Endothelial cell of umbilical vein (primary cell): ENCODE measurements at regions of chr20 and their contacts with region 1.

Region 1: GRCh38 chr20:20712474-20713243 is at the start of gene RALGAPA2:
- DNase-seq: peak; percentile 99
- H3K4me3 ChIP-seq: peak within 1 kb of the TSS; percentile 72 to 99 (median 77)
- H3K27ac ChIP-seq: peak within 1 kb of the TSS; percentile 77
- H3K4me1 ChIP-seq: peaks cover 21% of the 10 kb centered on the region
- H3K27me3 ChIP-seq: no peaks in the 10 kb centered on the region
- CTCF ChIP-seq: no peak
- POLR2A ChIP-seq: peak; percentile 36
- total RNA-seq, gene RALGAPA2: 39.7 and 46.8 TPM in 2 replicates

Region 2: GRCh38 chr20:20603339-20603990 is 109.2 kb before region 1 on chr20:
- CTCF ChIA-PET with region 1: no interaction called
- POLR2A ChIA-PET with region 1: no interaction called
- dilution Hi-C with region 1: no loop called
- intact Hi-C with region 1: no loop called
- DNase-seq: no peak
- H3K4me3 ChIP-seq: no peak overlapping the region
- H3K27ac ChIP-seq: no peak overlapping the region
- H3K4me1 ChIP-seq: peaks cover 3% of the 10 kb centered on the region
- H3K27me3 ChIP-seq: no peaks in the 10 kb centered on the region
- CTCF ChIP-seq: no peak
- POLR2A ChIP-seq: no peak

Region 3: GRCh38 chr20:20664795-20665589 is 47.7 kb before region 1 on chr20:
- CTCF ChIA-PET with region 1: no interaction called
- POLR2A ChIA-PET with region 1: no interaction called
- dilution Hi-C with region 1: no loop called
- intact Hi-C with region 1: loop called (anchors 2 kb)
- DNase-seq: peak; percentile 77
- H3K4me3 ChIP-seq: no peak overlapping the region
- H3K27ac ChIP-seq: no peak overlapping the region
- H3K4me1 ChIP-seq: peaks cover 26% of the 10 kb centered on the region
- H3K27me3 ChIP-seq: no peaks in the 10 kb centered on the region
- CTCF ChIP-seq: peak; percentile 52 to 60
- POLR2A ChIP-seq: peak; percentile 27

Region 4: GRCh38 chr20:20697325-20697845 is 15.3 kb before region 1 on chr20:
- CTCF ChIA-PET with region 1: no interaction called
- POLR2A ChIA-PET with region 1: no interaction called
- dilution Hi-C with region 1: no loop called
- intact Hi-C with region 1: loop called (anchors 2 kb)
- DNase-seq: no peak
- H3K4me3 ChIP-seq: no peak overlapping the region
- H3K27ac ChIP-seq: no peak overlapping the region
- H3K4me1 ChIP-seq: peaks cover 14% of the 10 kb centered on the region
- H3K27me3 ChIP-seq: no peaks in the 10 kb centered on the region
- CTCF ChIP-seq: no peak
- POLR2A ChIP-seq: no peak

Region 5: DNA sequence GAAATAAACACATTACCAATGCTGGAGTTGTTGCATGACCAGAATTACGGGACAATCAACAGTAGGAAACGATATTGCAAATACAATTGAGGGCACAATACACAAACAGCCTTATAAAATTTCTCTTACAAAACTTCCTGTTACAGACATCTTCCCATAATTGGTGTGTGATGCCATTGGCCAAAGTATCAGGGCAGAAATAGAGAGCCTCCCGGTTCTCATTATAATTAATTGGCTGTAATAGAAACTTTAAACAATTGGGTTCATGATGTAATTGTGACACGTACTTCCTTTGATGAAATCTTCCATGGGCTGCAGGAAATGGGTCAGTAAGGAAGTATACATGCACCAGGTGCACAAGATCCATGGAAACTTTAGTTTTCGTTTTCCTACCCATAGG is 40.1 kb after region 1 on chr20:
- CTCF ChIA-PET with region 1: no interaction called
- POLR2A ChIA-PET with region 1: no interaction called
- dilution Hi-C with region 1: no loop called
- intact Hi-C with region 1: loop called (anchors 2 kb)
- DNase-seq: peak; percentile 89
- H3K4me3 ChIP-seq: no peak overlapping the region
- H3K27ac ChIP-seq: peak overlapping the region; percentile 62
- H3K4me1 ChIP-seq: peaks cover 18% of the 10 kb centered on the region
- H3K27me3 ChIP-seq: no peaks in the 10 kb centered on the region
- CTCF ChIP-seq: no peak
- POLR2A ChIP-seq: no peak

Region 6: DNA sequence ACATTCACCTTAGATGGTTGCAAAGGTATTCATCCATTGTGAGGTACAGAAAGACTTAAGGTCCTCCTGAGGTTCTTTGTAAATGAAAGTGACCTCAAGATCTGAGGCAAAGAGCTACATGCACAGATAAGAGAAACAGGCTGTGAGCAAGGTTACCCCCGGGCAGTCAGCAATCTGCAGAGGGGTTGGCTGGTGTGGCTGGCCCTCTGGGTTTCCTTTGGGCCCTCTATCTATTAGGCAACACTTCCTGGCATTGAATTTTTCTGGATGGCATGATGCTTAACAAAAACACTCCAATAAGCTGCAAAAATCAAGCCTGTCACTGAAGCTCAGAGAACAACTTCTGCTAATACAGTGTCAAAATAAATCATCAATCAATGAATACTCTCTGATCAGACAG is 48.6 kb after region 1 on chr20:
- CTCF ChIA-PET with region 1: interaction called, 6 read pairs
- POLR2A ChIA-PET with region 1: interaction called, 4 read pairs
- dilution Hi-C with region 1: no loop called
- intact Hi-C with region 1: loop called (anchors 1 kb)
- DNase-seq: peak; percentile 87
- H3K4me3 ChIP-seq: no peak overlapping the region
- H3K27ac ChIP-seq: peak overlapping the region; percentile 54
- H3K4me1 ChIP-seq: peaks cover 53% of the 10 kb centered on the region
- H3K27me3 ChIP-seq: no peaks in the 10 kb centered on the region
- CTCF ChIP-seq: no peak
- POLR2A ChIP-seq: peak; percentile 56

Region 7: DNA sequence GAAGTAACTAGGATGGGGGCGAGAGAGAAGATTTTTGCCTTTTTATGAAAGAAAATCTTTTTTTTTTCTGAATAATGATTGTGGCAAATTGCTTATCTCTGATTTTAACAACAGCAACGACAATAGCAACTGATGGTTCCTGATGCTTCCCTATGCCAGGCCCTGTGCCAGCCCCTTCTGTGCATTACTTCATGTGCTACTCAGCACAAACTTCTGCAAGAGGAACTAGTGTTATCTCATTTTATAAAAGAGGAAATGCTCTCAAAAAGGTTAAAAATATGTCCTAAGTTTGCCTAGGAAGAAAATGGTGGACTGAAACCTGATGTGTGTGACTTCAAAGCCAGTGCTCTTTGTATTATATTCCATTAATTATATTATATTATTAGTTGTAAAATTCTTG is 73.8 kb after region 1 on chr20:
- CTCF ChIA-PET with region 1: no interaction called
- POLR2A ChIA-PET with region 1: no interaction called
- dilution Hi-C with region 1: no loop called
- intact Hi-C with region 1: no loop called
- DNase-seq: no peak
- H3K4me3 ChIP-seq: no peak overlapping the region
- H3K27ac ChIP-seq: no peak overlapping the region
- H3K4me1 ChIP-seq: no peaks in the 10 kb centered on the region
- H3K27me3 ChIP-seq: peaks cover 3 to 4% of the 10 kb centered on the region in 2 experiments
- CTCF ChIP-seq: no peak
- POLR2A ChIP-seq: no peak

Region 8: DNA sequence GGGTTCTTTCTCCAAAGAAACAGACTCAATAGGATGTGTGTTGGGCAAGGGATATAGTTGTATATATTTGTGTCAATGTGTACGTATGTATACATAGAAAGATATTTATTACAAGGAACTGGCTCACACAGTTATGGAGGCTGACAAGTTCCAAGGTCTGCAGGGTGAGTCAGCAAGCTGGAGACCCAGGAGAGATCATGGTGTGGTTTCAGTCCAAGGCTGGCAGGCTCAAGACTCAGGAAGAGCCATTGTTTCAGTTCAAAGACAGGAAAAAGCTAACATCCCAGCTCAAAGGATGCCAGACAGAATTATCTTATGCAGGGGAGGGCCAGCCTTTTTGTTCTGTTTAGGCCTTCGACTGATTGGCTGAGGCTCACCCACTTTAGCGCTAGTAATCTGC is 89.7 kb after region 1 on chr20:
- CTCF ChIA-PET with region 1: no interaction called
- POLR2A ChIA-PET with region 1: interaction called, 3 read pairs
- dilution Hi-C with region 1: no loop called
- intact Hi-C with region 1: loop called (anchors 5 kb)
- DNase-seq: peak; percentile 86
- H3K4me3 ChIP-seq: no peak overlapping the region
- H3K27ac ChIP-seq: peak overlapping the region; percentile 27
- H3K4me1 ChIP-seq: peaks cover 16% of the 10 kb centered on the region
- H3K27me3 ChIP-seq: peaks cover 0 to 6% of the 10 kb centered on the region in 2 experiments
- CTCF ChIP-seq: no peak
- POLR2A ChIP-seq: no peak

Region 9: GRCh38 chr20:20894753-20895152 is 182.1 kb after region 1 on chr20:
- CTCF ChIA-PET with region 1: no interaction called
- POLR2A ChIA-PET with region 1: no interaction called
- dilution Hi-C with region 1: no loop called
- intact Hi-C with region 1: no loop called
- DNase-seq: no peak
- H3K4me3 ChIP-seq: no peak overlapping the region
- H3K27ac ChIP-seq: no peak overlapping the region
- H3K4me1 ChIP-seq: no peaks in the 10 kb centered on the region
- H3K27me3 ChIP-seq: no peaks in the 10 kb centered on the region
- CTCF ChIP-seq: no peak
- POLR2A ChIP-seq: no peak